Dendritic cell treated with granulocyte-macrophage colony-stimulating factor and Interleukin-4, amounts not matched to agents 40 ng/mL and 50 ng/mL, for 4 days (primary cell): ENCODE measurements at regions of chr2 and their contacts with region 1.

Region 1: DNA sequence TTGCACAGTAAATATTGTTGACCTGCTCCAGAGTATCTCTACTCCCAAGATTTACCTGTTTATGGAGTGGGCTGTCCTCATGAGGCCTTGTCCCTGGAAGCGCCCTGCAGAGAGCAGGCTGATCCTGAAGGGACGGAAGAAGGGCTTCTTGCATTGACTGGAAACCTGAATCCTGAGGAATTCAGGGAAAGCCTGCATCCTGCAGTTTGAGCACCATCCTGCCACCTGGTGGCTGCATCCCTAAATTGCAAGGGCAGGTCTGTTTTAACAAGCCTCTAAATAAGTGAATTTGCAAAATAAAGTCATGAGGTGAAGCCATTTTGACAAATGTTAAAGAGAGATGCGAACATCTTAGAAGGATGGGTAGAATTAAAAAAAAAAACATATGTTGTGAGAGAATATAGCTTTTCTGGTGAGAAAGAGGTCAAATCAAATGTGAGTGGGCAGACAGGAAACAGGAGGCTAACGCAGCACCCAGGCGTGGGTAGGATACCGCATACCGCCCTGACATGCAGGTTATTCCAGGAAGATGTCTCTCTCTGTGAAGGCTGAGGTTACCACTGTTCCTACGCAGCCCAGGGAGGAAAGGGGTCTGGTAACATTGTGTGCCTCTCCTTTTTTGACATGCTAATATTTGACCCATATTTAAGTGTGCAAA is 754.9 kb downstream of the RNF144A start:
- H3K4me3 Mint-ChIP-seq: no peak overlapping the region
- H3K27ac Mint-ChIP-seq: no peak overlapping the region
- H3K4me1 Mint-ChIP-seq: peaks cover 11% of the 10 kb centered on the region
- H3K27me3 Mint-ChIP-seq: peaks cover 2% of the 10 kb centered on the region

Region 2: GRCh38 chr2:7097348-7097895 is 574.7 kb before region 1 on chr2:
- intact Hi-C with region 1: loop called (anchors 5 kb)
- H3K4me3 Mint-ChIP-seq: peak overlapping the region; percentile 20
- H3K27ac Mint-ChIP-seq: no peak overlapping the region
- H3K4me1 Mint-ChIP-seq: peaks cover 7% of the 10 kb centered on the region
- H3K27me3 Mint-ChIP-seq: peaks cover 13% of the 10 kb centered on the region

Region 3: DNA sequence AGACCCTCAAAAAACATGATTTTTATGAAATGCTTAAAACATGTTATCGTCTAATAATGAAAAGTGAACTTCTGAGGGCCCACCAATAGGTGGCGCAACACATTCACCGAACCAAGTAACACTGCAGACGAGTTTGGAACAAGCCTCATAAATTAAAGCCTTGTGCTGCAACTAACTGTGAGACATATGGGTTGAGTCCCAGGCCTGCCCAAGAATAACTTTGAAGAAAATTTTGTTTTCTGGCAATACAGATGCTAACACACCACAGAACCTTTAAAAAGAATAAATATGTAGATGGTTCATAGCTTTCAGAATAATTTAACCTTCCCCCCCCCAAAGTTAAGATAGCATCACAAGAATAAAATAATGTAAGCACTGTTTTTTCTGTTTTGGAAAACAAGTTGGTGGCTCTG is 469.1 kb before region 1 on chr2:
- intact Hi-C with region 1: loop called (anchors 2 kb)
- H3K4me3 Mint-ChIP-seq: no peak overlapping the region
- H3K27ac Mint-ChIP-seq: no peak overlapping the region
- H3K4me1 Mint-ChIP-seq: peaks cover 13% of the 10 kb centered on the region
- H3K27me3 Mint-ChIP-seq: peaks cover 2% of the 10 kb centered on the region

Region 4: GRCh38 chr2:7256377-7256776 is 415.8 kb before region 1 on chr2:
- intact Hi-C with region 1: no loop called
- H3K4me3 Mint-ChIP-seq: no peak overlapping the region
- H3K27ac Mint-ChIP-seq: no peak overlapping the region
- H3K4me1 Mint-ChIP-seq: no peaks in the 10 kb centered on the region
- H3K27me3 Mint-ChIP-seq: peaks cover 2% of the 10 kb centered on the region

Region 5: GRCh38 chr2:7427293-7428060 is 244.7 kb before region 1 on chr2:
- intact Hi-C with region 1: loop called (anchors 1 kb)
- H3K4me3 Mint-ChIP-seq: no peak overlapping the region
- H3K27ac Mint-ChIP-seq: no peak overlapping the region
- H3K4me1 Mint-ChIP-seq: peaks cover 44% of the 10 kb centered on the region
- H3K27me3 Mint-ChIP-seq: peaks cover 7% of the 10 kb centered on the region

Region 6: GRCh38 chr2:7661477-7661876 is 10.7 kb before region 1 on chr2:
- intact Hi-C with region 1: no loop called
- H3K4me3 Mint-ChIP-seq: no peak overlapping the region
- H3K27ac Mint-ChIP-seq: no peak overlapping the region
- H3K4me1 Mint-ChIP-seq: no peaks in the 10 kb centered on the region
- H3K27me3 Mint-ChIP-seq: no peaks in the 10 kb centered on the region

Region 7: DNA sequence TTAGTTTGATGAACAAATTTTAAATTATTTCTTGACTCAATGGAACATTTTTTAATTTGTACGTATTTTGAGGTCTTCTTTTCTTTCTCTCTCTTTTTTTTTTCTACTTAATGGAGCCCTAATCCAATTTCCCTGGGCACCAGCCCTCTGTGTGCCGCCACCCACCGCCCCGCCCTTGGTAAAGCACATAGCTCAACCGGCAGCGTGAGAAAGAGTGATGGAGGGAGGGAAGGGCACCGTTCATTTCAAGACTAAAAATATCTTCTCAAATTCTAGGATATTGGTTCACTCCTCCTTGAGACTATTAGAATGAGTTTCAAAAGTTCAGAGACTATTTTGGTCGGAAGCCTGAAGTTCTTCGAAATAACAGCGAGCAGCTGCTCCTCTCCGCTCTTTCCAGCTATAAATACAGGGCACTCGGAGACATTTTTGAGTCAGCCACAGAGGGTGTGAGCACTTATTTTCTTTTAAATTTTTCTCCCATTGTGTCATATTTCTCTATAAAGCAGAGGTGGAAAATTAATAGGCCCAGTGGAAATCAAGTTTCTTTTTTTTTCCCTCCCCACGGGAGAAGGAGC is 278.0 kb after region 1 on chr2:
- intact Hi-C with region 1: no loop called
- H3K4me3 Mint-ChIP-seq: no peak overlapping the region
- H3K27ac Mint-ChIP-seq: no peak overlapping the region
- H3K4me1 Mint-ChIP-seq: no peaks in the 10 kb centered on the region
- H3K27me3 Mint-ChIP-seq: peaks cover 8% of the 10 kb centered on the region